Adrenal gland (tissue), 19 donors: ENCODE measurements at regions of chr19 and their contacts with region 1.

Region 1: DNA sequence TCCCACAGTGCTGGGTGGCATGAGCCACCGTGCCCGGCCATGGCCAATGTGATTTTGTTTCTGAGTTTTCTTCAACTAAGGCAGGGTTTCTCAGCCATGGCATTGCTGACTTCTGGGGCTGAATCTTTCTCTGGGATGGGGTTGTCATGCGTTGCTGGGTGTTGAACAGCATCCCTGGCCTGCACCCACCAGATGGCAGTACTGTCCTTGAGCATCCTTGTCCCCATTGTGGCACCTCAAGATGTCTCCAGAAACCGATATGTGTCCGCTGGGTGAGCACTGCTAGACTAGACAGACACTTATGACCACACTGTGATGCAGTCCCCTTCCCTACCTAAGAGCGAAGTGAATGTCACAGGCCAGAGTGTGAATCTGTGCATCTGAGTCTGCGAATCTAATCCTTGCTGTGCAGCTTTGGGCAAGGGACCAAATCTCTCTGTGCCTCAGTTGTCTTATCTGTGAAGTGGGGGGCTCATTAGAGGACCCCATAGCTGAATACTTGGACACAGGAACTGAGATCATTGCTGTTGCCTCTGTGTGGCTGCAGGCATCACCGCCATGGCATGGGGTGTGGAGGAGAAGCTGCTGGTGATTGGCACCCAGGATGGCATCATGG is 50.3 kb upstream of the SIN3B start:
- DNase-seq: peak; percentile 57 to 87 (median 71)
- H3K4me3 ChIP-seq: no peak overlapping the region
- H3K27ac ChIP-seq: no peak overlapping the region
- H3K4me1 ChIP-seq: no peaks in the 10 kb centered on the region
- H3K27me3 ChIP-seq: no peaks in the 10 kb centered on the region
- CTCF ChIP-seq: peak; percentile 36 to 77 (median 68)
- POLR2A ChIP-seq: no peak

Region 2: DNA sequence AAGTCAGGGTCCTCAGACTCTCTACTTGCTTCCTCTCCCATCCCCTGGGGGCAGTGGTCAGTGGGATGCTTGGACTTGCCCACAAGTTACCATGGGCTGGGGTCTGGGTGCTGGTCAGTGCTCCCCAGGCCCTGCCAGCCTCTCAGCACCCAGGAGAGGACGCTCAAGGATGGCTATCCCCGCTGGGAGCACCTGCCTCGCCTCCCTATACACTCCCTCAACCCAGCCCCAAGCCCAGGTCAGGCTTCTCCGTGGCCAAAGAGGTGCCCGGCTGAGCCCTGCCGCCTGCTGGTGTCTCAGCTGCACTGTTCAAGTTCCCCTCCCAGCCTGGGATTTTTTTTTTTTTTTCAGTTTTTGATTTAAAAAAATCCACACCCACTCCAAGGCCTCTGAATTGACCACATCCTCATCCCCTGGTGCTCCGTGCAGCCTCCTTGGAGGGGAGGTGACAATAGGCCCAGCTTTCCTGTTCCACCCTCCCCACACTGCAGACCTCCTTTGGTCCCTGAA is 120.7 kb after region 1 on chr19:
- intact Hi-C with region 1: loop called (anchors 5 to 10 kb)
- DNase-seq: peak in 2 of 7 donors; percentile 43 to 63
- H3K4me3 ChIP-seq: no peak overlapping the region
- H3K27ac ChIP-seq: no peak overlapping the region
- H3K4me1 ChIP-seq: peaks cover 10 to 12% of the 10 kb centered on the region in 2 donors
- H3K27me3 ChIP-seq: no peaks in the 10 kb centered on the region
- CTCF ChIP-seq: peak in 5 of 6 experiments; percentile 25 to 54 (median 53)
- POLR2A ChIP-seq: no peak

Region 3: GRCh38 chr19:17125715-17126677 is 347.1 kb after region 1 on chr19:
- intact Hi-C with region 1: no loop called
- DNase-seq: peak in 6 of 7 donors; percentile 56 to 91 (median 62)
- H3K4me3 ChIP-seq: no peak overlapping the region
- H3K27ac ChIP-seq: peak overlapping the region in 3 of 5 donors; percentile 38 to 82 (median 82)
- H3K4me1 ChIP-seq: peaks cover 12 to 25% of the 10 kb centered on the region in 2 donors
- H3K27me3 ChIP-seq: no peaks in the 10 kb centered on the region
- CTCF ChIP-seq: no peak
- POLR2A ChIP-seq: no peak

Region 4: DNA sequence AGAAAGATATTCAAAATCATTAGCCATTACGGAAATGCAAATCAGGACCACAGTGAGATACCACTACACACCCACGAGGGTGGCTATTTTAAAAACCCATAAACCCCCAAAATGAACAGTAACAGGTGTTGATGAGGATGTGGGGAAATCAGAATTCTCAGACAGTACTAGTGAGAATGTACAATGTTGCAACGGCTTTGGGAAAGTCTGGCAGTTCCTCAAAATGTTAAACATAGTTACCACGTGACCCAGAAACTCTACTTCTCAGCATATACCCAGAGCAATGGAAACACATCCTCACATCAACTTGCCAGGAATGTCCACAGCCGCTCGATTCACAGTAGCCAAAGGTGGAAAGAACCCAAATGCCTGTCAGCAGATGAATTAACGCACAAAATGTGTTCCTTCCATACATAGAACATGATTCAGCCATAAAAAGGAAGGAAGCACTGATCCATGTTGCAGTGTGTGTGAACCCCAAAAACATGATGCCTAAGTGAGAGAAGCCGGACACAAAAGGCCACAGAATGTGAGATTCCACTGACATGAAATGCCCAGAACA is 591.2 kb after region 1 on chr19:
- intact Hi-C with region 1: no loop called
- DNase-seq: peak in 2 of 7 donors; percentile 40 to 48
- H3K4me3 ChIP-seq: no peak overlapping the region
- H3K27ac ChIP-seq: peak overlapping the region in 1 of 5 donors; percentile 44
- H3K4me1 ChIP-seq: no peaks in the 10 kb centered on the region
- H3K27me3 ChIP-seq: no peaks in the 10 kb centered on the region
- CTCF ChIP-seq: no peak
- POLR2A ChIP-seq: no peak